Right lobe of liver (tissue), 6 donors: ENCODE measurements at regions of chr3 and their contacts with region 1.

Region 1: DNA sequence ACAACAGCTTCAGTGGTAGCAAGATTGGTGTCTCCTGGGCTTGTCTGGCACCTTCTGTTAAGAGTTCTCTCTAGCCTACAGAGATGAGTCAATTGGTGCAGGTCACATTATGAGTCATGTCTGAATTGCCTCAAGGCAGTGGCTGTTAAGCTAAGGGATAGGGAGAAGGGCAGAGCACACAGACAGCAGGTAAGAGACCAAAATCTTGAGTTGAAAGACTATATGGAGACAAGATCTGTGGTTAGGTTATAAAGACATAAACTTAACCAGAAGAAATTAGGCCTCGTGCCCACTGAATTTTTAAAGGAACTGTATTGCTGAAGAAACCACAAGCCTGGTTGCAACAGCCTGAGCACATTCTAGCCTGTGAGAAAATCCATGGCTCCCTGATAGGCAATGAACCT is 19.2 kb upstream of the KPNA1 start:
- DNase-seq: no peak
- ATAC-seq: peak in 1 of 4 donors; percentile 72
- H3K4me3 ChIP-seq: no peak overlapping the region
- H3K27ac ChIP-seq: no peak overlapping the region
- H3K4me1 ChIP-seq: no peaks in the 10 kb centered on the region
- H3K27me3 ChIP-seq: no peaks in the 10 kb centered on the region
- CTCF ChIP-seq: no peak
- POLR2A ChIP-seq: no peak

Region 2: DNA sequence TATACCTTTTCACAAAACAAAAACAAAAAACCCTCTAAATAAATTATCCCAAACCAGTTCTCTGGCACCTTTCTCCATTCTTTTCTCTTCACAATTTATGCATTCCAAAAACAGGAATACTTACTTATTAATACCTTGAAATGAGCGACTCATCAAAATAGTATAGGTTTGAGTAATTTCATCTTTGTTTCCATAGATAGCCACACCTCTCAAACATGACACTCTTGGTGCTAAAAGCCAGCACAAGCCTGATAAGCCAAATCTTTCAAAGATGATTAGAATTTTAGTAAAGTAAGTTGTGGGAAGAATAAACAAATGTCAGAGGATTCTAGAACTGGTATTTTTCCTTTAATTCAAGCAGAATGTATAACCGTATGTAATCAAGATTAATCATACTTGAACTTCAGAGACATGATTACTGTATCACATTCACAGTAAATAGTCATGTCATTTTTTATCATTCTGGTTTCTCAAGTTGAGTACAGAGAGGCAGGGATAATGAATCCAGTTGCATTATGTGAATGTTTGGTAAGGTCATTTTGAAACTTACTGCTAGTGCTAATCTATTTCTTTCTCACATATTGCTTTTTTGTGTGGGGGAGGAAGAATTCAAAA is 106.0 kb before region 1 on chr3:
- intact Hi-C with region 1: loop called in 1 of 2 experiments (anchors 10 kb)
- DNase-seq: no peak
- ATAC-seq: no peak
- H3K4me3 ChIP-seq: no peak overlapping the region
- H3K27ac ChIP-seq: no peak overlapping the region
- H3K4me1 ChIP-seq: no peaks in the 10 kb centered on the region
- H3K27me3 ChIP-seq: no peaks in the 10 kb centered on the region
- CTCF ChIP-seq: no peak
- POLR2A ChIP-seq: no peak